CD4-positive, alpha-beta memory T cell (primary cell): ENCODE measurements at regions of chr10 and their contacts with region 1.

Region 1: DNA sequence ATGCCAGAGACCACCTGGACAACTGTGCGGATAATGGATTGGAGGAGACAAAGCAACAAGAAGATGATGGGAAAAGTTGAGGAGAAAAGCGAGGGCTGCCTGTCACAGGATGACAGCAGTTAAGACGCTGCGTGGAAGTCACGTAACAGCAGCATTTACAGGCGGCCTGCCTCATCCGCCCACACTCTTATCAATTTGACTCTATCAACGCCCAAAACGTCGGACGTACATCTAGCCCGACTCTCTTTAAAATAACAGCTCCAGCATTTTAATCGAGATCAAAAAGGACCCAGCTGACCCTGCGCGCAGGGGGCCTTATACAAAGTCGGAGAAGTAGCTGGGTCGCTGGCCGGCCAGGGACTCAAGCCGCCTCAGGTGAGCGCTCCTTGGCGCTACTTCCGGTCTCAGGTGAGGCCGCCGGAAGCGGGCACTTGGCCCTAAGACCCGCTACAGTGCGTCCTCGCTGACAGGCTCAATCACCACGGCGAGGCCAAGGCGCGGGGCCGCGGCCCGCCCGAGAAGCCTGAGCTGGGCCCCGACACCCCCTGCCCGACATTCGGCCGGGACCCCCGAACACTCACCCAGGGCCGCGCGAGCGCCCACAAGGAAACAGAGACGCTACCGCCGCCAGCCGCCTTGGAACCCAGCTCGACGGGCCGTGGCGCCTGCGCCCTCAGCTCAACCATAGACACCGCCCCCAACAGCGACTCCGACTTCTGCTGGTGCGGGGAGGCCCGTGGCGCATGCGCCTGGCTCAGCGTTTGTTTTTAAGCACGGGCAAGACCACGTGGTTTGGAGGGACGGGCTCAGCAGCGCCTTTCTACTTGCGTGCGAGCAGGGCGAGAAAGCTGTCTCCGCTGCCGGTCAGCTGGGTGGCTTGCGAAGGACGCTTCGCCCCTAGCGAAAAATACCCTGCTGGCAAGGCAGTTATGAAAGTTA is at the start of gene ERCC6:
- DNase-seq: peak; percentile 92 to 97 (median 94)
- H3K4me3 ChIP-seq: peak within 1 kb of the TSS; percentile 77 to 78
- H3K4me3 Mint-ChIP-seq: peak within 1 kb of the TSS; percentile 92 to 98 (median 94)
- H3K27ac ChIP-seq: peak within 1 kb of the TSS; percentile 72
- H3K27ac Mint-ChIP-seq: peak within 1 kb of the TSS; percentile 93 to 98 (median 97)
- H3K4me1 ChIP-seq: peaks cover 17% of the 10 kb centered on the region
- H3K4me1 Mint-ChIP-seq: peaks cover 26 to 44% (median 36%) of the 10 kb centered on the region in 4 donors
- H3K27me3 ChIP-seq: no peaks in the 10 kb centered on the region
- H3K27me3 Mint-ChIP-seq: peaks cover 12 to 13% of the 10 kb centered on the region in 2 donors
- total RNA-seq, gene ERCC6: 46.0 to 46.7 TPM

Region 2: GRCh38 chr10:48306265-48306869 is 1232.3 kb before region 1 on chr10 and contains the start of gene MAPK8:
- CTCF ChIA-PET with region 1: no interaction called
- POLR2A ChIA-PET with region 1: no interaction called
- intact Hi-C with region 1: loop called (anchors 1 kb)
- DNase-seq: peak; percentile 92 to 94 (median 92)
- H3K4me3 ChIP-seq: peak within 1 kb of the TSS; percentile 62 to 83
- H3K4me3 Mint-ChIP-seq: peak within 1 kb of the TSS; percentile 77 to 93 (median 86)
- H3K27ac ChIP-seq: peak within 1 kb of the TSS; percentile 75
- H3K27ac Mint-ChIP-seq: peak within 1 kb of the TSS; percentile 87 to 97 (median 93)
- H3K4me1 ChIP-seq: peaks cover 23% of the 10 kb centered on the region
- H3K4me1 Mint-ChIP-seq: peaks cover 20 to 39% (median 27%) of the 10 kb centered on the region in 4 donors
- H3K27me3 ChIP-seq: no peaks in the 10 kb centered on the region
- H3K27me3 Mint-ChIP-seq: no peaks in the 10 kb centered on the region
- total RNA-seq, gene MAPK8: 47.6 to 49.9 TPM

Region 3: DNA sequence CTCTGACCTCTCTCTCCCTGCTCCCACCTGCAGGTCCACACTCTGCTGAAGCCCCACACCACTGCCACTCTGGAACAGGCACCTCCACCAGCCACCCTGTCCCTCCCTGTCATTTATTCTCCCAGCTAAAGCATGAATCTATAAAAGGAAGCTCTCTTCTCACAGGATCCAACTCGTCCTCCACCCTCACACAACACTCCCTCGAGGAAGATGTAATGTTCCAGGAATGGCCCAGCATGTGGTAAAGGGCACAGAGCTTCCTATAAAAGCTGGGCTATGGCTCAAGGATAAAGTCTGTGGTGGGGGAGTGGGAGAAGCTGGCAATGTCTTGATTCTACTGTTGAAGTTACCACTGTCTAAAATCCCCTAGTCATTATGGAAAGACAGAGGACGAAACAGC is 67.1 kb before region 1 on chr10:
- CTCF ChIA-PET with region 1: no interaction called
- POLR2A ChIA-PET with region 1: no interaction called
- intact Hi-C with region 1: no loop called
- DNase-seq: no peak
- H3K4me3 ChIP-seq: no peak overlapping the region
- H3K4me3 Mint-ChIP-seq: no peak overlapping the region
- H3K27ac ChIP-seq: no peak overlapping the region
- H3K27ac Mint-ChIP-seq: no peak overlapping the region
- H3K4me1 ChIP-seq: no peaks in the 10 kb centered on the region
- H3K4me1 Mint-ChIP-seq: no peaks in the 10 kb centered on the region
- H3K27me3 ChIP-seq: no peaks in the 10 kb centered on the region
- H3K27me3 Mint-ChIP-seq: no peaks in the 10 kb centered on the region